Endothelial cell of umbilical vein (primary cell): ENCODE measurements at regions of chr13 and their contacts with region 1.

Region 1: GRCh38 chr13:76886292-76887075 is at the start of gene KCTD12:
- DNase-seq: peak; percentile 91
- H3K4me3 ChIP-seq: peak within 1 kb of the TSS; percentile 91 to 98 (median 95)
- H3K27ac ChIP-seq: peak within 1 kb of the TSS; percentile 84
- H3K4me1 ChIP-seq: peaks cover 21% of the 10 kb centered on the region
- H3K27me3 ChIP-seq: no peaks in the 10 kb centered on the region
- CTCF ChIP-seq: peak; percentile 23 to 45
- POLR2A ChIP-seq: peak; percentile 98
- total RNA-seq, gene KCTD12: 90.8 and 116 TPM in 2 replicates

Region 2: DNA sequence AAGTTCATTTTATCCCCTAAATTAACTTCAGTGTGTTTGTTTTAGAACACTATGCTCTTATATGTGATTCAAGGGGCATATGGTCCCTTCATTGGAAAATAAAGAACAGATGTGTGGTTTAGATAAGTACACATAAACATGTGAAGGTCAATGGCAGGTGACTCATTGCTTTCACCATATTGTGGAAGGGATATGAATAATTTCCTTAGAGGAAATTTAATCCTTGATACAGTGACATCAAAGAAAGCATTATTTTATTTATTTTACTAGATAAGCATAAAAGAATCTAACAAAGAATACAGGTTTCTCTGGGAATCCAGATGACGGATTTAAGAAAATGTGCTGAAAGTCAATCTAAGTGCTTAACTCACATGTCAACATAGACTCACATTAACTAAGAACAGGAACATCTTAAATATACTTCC is 373.8 kb before region 1 on chr13:
- CTCF ChIA-PET with region 1: interaction called, 6 read pairs
- POLR2A ChIA-PET with region 1: interaction called, 3 read pairs
- dilution Hi-C with region 1: no loop called
- intact Hi-C with region 1: loop called (anchors 1 kb)
- DNase-seq: peak; percentile 98
- H3K4me3 ChIP-seq: no peak overlapping the region
- H3K27ac ChIP-seq: peak overlapping the region; percentile 89
- H3K4me1 ChIP-seq: peaks cover 49% of the 10 kb centered on the region
- H3K27me3 ChIP-seq: no peaks in the 10 kb centered on the region
- CTCF ChIP-seq: no peak
- POLR2A ChIP-seq: peak; percentile 90

Region 3: DNA sequence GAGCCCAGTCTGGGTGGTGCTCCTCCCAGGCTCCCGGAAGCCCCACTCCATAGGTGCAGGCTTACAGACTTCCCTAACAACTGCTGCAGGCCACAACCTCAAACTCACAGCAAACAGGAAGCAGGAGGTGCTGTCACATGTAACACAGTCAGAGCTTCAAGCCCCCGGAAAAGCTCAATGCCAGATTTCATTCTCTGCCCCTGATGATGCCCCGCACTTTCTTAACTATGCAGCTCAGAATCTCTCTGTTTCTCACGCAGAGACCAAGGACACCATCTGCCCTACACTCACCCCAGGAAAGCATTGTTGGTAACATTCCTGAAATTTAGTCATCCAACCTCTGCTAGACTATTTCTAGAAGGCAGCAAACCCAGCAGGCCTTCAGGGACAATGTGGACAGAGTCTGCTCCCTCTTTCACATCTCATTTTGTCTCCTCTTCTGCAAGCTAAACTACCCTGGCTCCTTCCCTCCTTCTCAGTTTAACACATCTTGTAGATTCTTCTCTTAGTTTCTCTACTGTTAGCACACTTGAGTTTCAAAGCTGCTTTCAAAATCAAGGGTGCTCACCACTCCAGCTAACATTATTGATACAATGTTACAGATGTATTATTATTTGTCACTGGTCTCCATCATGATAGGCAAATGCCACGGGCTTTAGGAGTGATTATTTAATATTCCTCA is 162.8 kb before region 1 on chr13:
- CTCF ChIA-PET with region 1: interaction called, 29 read pairs
- POLR2A ChIA-PET with region 1: interaction called, 5 read pairs
- dilution Hi-C with region 1: no loop called
- intact Hi-C with region 1: loop called (anchors 1 kb)
- DNase-seq: peak; percentile 95
- H3K4me3 ChIP-seq: no peak overlapping the region
- H3K27ac ChIP-seq: peak overlapping the region; percentile 81
- H3K4me1 ChIP-seq: peaks cover 32% of the 10 kb centered on the region
- H3K27me3 ChIP-seq: no peaks in the 10 kb centered on the region
- CTCF ChIP-seq: no peak
- POLR2A ChIP-seq: peak; percentile 15

Region 4: DNA sequence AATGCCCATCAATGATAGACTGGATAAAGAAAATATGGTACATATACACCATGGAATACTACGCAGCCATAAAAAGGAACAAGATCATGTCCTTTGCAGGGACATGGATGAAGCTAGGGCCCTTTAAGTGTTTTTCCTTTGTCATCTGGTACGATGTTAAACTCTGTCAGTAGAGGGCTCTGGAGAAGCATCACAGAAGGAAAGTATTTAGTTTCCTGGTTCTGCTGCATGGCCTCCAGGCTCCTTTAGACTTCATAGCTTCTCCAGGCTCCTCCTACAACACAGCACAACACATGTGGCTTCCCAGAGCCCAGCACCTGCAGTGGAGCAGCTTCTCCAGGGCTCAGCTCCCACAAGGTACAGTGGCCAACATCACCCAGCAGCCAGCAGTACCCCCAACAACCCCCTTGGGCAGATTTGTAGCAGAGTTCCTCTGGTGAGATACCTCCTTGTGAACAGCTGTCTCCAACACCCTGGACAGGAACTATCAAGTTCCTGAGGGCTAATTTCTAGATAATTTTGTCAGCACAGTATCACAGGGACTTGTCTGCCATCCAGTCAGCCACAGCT is 63.7 kb before region 1 on chr13:
- CTCF ChIA-PET with region 1: interaction called, 156 read pairs
- POLR2A ChIA-PET with region 1: interaction called, 8 read pairs
- dilution Hi-C with region 1: no loop called
- intact Hi-C with region 1: loop called (anchors 1 kb)
- DNase-seq: peak; percentile 71
- H3K4me3 ChIP-seq: no peak overlapping the region
- H3K27ac ChIP-seq: no peak overlapping the region
- H3K4me1 ChIP-seq: no peaks in the 10 kb centered on the region
- H3K27me3 ChIP-seq: no peaks in the 10 kb centered on the region
- CTCF ChIP-seq: peak in 1 of 2 donors; percentile 8
- POLR2A ChIP-seq: no peak

Region 5: DNA sequence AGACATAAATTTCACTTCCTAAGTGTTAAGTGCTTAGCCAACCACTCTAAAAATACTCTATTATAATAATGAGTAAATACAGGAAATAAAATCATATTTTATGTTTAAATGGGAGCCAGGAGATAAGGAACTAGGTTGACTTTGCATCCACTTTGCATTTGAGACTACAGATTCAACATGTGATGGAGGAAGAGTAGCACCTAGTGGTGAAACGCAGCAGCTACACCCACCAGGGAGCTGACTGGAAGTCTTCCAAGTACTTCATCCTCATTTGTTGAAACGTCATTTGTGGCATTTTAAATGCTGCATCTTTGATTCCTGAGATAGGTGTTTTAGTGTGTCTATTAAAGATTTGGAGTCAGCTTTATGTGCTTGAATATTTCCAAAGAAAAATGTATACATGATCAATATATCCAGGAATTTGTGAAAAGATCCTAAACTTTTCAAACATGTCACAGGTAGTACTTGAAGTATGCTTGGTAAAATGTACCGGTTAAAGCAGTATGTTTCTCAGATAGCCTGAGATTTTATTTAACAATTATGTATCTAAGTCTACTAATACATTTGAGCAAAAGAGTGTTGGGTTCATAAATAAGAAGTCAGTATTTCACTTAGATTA is 17.2 kb after region 1 on chr13:
- CTCF ChIA-PET with region 1: interaction called, 16 read pairs
- POLR2A ChIA-PET with region 1: interaction called, 4 read pairs
- dilution Hi-C with region 1: no loop called
- intact Hi-C with region 1: loop called (anchors 1 kb)
- DNase-seq: peak; percentile 89
- H3K4me3 ChIP-seq: no peak overlapping the region
- H3K27ac ChIP-seq: no peak overlapping the region
- H3K4me1 ChIP-seq: peaks cover 5% of the 10 kb centered on the region
- H3K27me3 ChIP-seq: peaks cover 3 to 12% of the 10 kb centered on the region in 2 experiments
- CTCF ChIP-seq: peak; percentile 93 to 97
- POLR2A ChIP-seq: no peak